ENCODE measurements at regions of chr7 and their contacts with region 1.

Region 1: GRCh38 chr7:127253281-127254162 is 781 bp upstream of the GRM8 start:
- DNase-seq: peak; percentile 93
- H3K4me3 ChIP-seq: peak overlapping the region; percentile 69 to 77
- H3K27ac ChIP-seq: no peak overlapping the region
- H3K4me1 ChIP-seq: peaks cover 0 to 24% of the 10 kb centered on the region in 2 experiments; a peak in 1 of 4 replicates
- H3K27me3 ChIP-seq: peaks cover 57% of the 10 kb centered on the region
- CTCF ChIP-seq: peak; percentile 91
- EP300 ChIP-seq: no peak
- RAD21 ChIP-seq: peak; percentile 84

Region 2: DNA sequence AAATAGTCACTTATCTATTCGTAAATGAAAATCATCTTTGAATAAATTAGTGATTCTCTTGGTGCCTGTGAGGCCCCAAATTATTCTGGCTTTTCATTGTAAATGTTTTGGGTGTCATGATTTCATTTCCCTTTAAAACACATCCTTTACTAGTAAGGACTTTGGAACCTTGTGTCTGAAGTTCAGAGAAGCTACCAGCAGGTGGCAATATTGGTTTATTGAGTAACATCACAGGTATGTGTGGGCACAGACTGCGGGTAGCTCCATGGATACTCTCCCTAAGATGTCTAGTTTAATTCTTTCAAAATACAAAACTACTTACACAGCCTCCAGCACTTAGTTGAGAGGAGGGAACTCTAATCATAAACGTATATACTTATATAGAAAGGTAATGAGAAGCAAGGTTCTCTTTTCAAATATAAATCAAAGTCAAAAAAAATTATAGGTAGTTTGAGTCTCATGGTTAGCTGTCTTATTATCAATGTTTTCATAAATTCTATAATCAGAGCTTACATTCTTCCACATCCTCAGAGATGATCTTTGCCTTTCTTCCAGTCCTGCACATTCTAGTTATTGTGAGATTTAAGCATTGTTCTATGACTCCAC is 450.4 kb before region 1 on chr7:
- CTCF ChIA-PET with region 1: interaction called, 58 read pairs
- POLR2A ChIA-PET with region 1: no interaction called
- DNase-seq: peak; percentile 69
- H3K4me3 ChIP-seq: no peak overlapping the region; a peak in 1 of 4 replicates
- H3K27ac ChIP-seq: no peak overlapping the region; a peak in 1 of 4 replicates
- H3K4me1 ChIP-seq: peaks cover 0 to 10% of the 10 kb centered on the region in 2 experiments; a peak in 2 of 4 replicates
- H3K27me3 ChIP-seq: no peaks in the 10 kb centered on the region
- CTCF ChIP-seq: peak; percentile 94
- EP300 ChIP-seq: no peak
- RAD21 ChIP-seq: peak; percentile 95

Region 3: GRCh38 chr7:127123220-127123619 is 130.3 kb before region 1 on chr7:
- CTCF ChIA-PET with region 1: interaction called, 10 read pairs
- POLR2A ChIA-PET with region 1: no interaction called
- DNase-seq: no peak
- H3K4me3 ChIP-seq: no peak overlapping the region
- H3K27ac ChIP-seq: no peak overlapping the region
- H3K4me1 ChIP-seq: no peaks in the 10 kb centered on the region
- H3K27me3 ChIP-seq: no peaks in the 10 kb centered on the region
- CTCF ChIP-seq: no peak
- EP300 ChIP-seq: no peak
- RAD21 ChIP-seq: no peak

Region 4: GRCh38 chr7:127239814-127240213 is 13.7 kb before region 1 on chr7:
- CTCF ChIA-PET with region 1: interaction called, 21 read pairs
- POLR2A ChIA-PET with region 1: no interaction called
- DNase-seq: no peak
- H3K4me3 ChIP-seq: no peak overlapping the region; a peak in 1 of 4 replicates
- H3K27ac ChIP-seq: no peak overlapping the region
- H3K4me1 ChIP-seq: no peaks in the 10 kb centered on the region
- H3K27me3 ChIP-seq: 0 out of 2 replicates have a peak, but pooled peaks cover 3% of the 10 kb centered on the region
- CTCF ChIP-seq: peak; percentile 37; the same call in 1 of the 2 replicates
- EP300 ChIP-seq: no peak
- RAD21 ChIP-seq: no peak

Region 5: DNA sequence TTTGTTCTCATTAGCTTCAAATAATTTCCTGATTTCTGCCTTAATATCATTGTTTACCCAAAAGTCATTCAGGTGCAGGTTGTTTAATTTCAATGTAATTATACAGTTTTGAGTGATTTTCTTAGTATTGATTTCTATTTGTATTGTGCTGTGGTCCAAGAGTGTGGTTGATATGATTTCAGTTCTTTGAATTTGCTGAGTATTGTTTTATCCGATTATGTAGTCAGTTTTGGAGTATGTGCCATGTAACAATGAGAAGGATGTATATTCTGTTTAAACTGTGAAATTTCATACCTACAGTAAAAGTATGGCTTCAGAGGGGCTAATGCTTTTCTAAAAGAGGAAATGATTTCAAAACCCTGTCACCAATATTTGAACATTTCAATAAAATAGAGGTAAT is 16.6 kb after region 1 on chr7:
- CTCF ChIA-PET with region 1: interaction called, 21 read pairs
- POLR2A ChIA-PET with region 1: no interaction called
- DNase-seq: no peak
- H3K4me3 ChIP-seq: no peak overlapping the region
- H3K27ac ChIP-seq: no peak overlapping the region
- H3K4me1 ChIP-seq: no peaks in the 10 kb centered on the region
- H3K27me3 ChIP-seq: no peaks in the 10 kb centered on the region
- CTCF ChIP-seq: no peak
- EP300 ChIP-seq: no peak
- RAD21 ChIP-seq: no peak

Region 6: GRCh38 chr7:127514499-127514898 is 261.0 kb after region 1 on chr7:
- CTCF ChIA-PET with region 1: interaction called, 18 read pairs
- POLR2A ChIA-PET with region 1: no interaction called
- DNase-seq: peak; percentile 68
- H3K4me3 ChIP-seq: no peak overlapping the region
- H3K27ac ChIP-seq: no peak overlapping the region
- H3K4me1 ChIP-seq: no peaks in the 10 kb centered on the region
- H3K27me3 ChIP-seq: no peaks in the 10 kb centered on the region
- CTCF ChIP-seq: peak; percentile 61
- EP300 ChIP-seq: no peak
- RAD21 ChIP-seq: peak; percentile 87

Measured in SK-N-SH (cell line).